Activated CD8-positive, alpha-beta memory T cell treated with anti-CD3 and anti-CD28 coated beads, Interleukin-2, amount 10 ng/mL, durations not matched to agents 7 days and 5 days (primary cell): ENCODE measurements at regions of chr9 and their contacts with region 1.

Region 1: GRCh38 chr9:132169672-132170392 is 8.0 kb downstream of the NTNG2 start:
- DNase-seq: peak; percentile 66
- ATAC-seq: peak; percentile 71
- H3K4me3 Mint-ChIP-seq: no peak overlapping the region
- H3K27ac Mint-ChIP-seq: no peak overlapping the region
- H3K4me1 Mint-ChIP-seq: no peaks in the 10 kb centered on the region
- H3K27me3 Mint-ChIP-seq: peaks cover 22% of the 10 kb centered on the region

Region 2: DNA sequence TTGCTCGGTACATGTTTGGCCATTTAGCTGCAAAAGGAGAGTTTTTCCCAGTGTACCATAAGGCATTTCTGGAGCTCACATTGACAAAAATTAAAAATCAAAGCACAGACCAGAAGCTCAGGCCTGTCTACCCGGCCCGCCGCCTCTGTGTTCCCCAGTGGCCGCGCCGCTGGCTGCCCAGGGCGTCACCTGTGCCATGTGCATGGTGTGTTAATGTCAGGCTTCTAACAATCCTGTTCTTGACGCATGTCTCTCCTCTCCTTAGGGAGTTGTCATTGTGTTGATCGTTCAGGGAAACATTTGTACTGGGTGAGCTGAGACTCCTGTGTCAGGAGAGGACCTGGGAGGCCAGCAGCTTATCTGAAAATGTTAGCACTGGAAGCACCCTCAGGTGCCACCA is 17.6 kb before region 1 on chr9:
- CTCF ChIA-PET with region 1: interaction called, 10 read pairs
- DNase-seq: no peak
- ATAC-seq: no peak
- H3K4me3 Mint-ChIP-seq: no peak overlapping the region
- H3K27ac Mint-ChIP-seq: no peak overlapping the region
- H3K4me1 Mint-ChIP-seq: peaks cover 6% of the 10 kb centered on the region
- H3K27me3 Mint-ChIP-seq: peaks cover 66% of the 10 kb centered on the region

Region 3: GRCh38 chr9:132182314-132183091 is 12.7 kb after region 1 on chr9:
- CTCF ChIA-PET with region 1: interaction called, 22 read pairs
- DNase-seq: no peak
- ATAC-seq: no peak
- H3K4me3 Mint-ChIP-seq: no peak overlapping the region
- H3K27ac Mint-ChIP-seq: no peak overlapping the region
- H3K4me1 Mint-ChIP-seq: peaks cover 2% of the 10 kb centered on the region
- H3K27me3 Mint-ChIP-seq: peaks cover 25% of the 10 kb centered on the region

Region 4: DNA sequence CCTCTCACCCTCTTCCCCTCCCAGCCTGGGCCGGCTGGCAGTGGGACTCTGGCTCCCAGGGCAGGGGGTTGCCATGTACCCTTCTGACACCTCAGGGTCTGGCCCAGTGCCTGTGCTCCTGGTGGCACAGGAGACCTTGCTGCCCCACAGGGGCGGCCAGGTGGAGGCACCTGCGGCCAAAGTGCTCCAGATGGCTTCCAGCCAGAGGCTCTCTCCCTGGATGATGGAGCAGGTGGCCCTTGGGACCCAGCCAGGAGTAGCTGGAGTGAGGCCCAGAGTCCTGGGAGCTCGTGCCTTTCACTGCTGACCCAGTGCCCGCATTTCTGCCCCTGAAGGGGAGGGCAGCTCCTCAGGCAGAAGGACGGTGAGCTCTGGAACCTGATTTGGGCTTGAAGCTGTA is 79.3 kb after region 1 on chr9:
- CTCF ChIA-PET with region 1: interaction called, 11 read pairs
- DNase-seq: no peak
- ATAC-seq: no peak
- H3K4me3 Mint-ChIP-seq: no peak overlapping the region
- H3K27ac Mint-ChIP-seq: no peak overlapping the region
- H3K4me1 Mint-ChIP-seq: peaks cover 5% of the 10 kb centered on the region
- H3K27me3 Mint-ChIP-seq: peaks cover 32% of the 10 kb centered on the region

Region 5: GRCh38 chr9:132877824-132878694 is 708.2 kb after region 1 on chr9 and contains the start of gene AK8:
- CTCF ChIA-PET with region 1: no interaction called
- DNase-seq: peak; percentile 78
- ATAC-seq: peak; percentile 84
- H3K4me3 Mint-ChIP-seq: peak within 1 kb of the TSS; percentile 70
- H3K27ac Mint-ChIP-seq: peak within 1 kb of the TSS; percentile 70
- H3K4me1 Mint-ChIP-seq: peaks cover 41% of the 10 kb centered on the region
- H3K27me3 Mint-ChIP-seq: peaks cover 28% of the 10 kb centered on the region
- total RNA-seq, gene AK8: 0.63 TPM in 1 of 2 experiments, not detected in the other